Dendritic cell treated with granulocyte-macrophage colony-stimulating factor and Interleukin-4, amounts not matched to agents 40 ng/mL and 50 ng/mL, for 4 days (primary cell): ENCODE measurements at regions of chr3 and their contacts with region 1.

Region 1: DNA sequence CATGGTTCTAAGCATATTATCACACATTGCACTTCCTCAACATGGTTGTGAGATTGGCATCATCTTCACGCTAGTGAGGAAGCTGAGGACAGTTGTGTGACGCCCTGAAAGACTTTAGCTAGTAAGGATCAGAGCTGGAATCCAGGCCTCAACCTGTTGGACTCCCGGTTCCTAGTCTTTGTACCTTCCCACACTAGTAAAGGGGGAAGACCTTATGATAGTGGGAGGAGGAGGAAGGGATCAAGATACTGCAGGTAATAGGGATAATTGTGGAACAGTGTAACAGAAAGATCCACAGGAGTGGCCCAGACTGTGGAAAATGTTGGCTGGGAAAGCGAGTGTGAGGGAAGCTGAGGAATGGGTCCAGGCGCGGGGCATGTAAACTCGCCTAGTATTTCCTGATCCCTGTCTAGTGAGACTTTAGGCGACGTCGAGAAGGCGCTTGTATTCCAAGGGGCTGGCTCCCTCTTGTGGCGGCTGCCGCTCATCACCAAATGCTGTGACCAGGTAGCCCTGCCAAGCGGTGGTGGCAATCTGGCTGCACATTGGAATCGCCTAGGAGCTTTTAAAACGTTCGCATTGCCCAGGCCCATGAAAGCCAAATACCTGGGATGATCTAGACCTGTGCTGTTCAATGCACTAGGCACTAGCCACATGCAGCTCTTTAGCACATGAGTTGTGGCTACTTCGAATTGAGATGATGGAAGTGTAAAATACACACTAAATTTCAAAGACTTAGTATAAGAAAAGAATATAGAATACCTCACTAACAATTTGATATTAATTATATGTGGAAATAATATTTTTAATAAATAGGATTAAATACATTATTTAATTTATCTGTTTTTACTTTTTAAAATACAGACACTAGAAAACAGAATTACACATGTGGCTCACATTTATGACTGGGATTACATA is 38.8 kb upstream of the CLDN18 start:
- H3K4me3 Mint-ChIP-seq: no peak overlapping the region
- H3K27ac Mint-ChIP-seq: no peak overlapping the region
- H3K4me1 Mint-ChIP-seq: peaks cover 5% of the 10 kb centered on the region
- H3K27me3 Mint-ChIP-seq: peaks cover 8% of the 10 kb centered on the region

Region 2: DNA sequence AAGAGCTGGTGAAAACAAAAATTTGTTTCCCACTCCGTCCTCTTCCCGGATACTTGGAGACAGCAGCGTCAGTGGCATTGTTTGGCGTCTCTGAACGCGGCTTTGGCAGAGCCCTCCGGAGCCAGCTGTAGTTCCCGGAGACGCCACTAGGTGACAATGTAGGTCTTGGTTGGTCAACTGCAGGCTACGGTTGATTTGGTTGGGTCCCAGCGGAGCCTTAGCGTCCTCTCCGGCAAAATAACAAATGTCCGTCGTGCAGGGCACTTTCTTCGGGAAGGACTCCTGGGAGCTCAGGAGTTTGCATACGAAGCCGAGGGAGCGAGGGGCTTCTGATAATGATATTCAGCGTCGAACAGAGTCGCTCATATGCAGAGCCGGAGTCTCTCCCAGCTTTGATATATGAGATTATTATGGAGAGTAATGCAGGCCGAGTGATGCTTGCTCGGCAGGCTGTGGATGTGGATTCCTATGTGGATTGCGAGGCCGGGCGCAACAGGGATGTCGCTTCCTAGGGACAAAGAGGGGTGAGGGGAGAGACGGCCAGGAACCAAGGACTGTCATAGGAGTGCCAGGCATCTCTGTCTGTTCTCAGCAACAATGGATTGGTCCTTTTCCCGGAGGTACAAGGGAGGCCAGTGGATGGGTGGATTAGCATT is 938.6 kb before region 1 on chr3:
- intact Hi-C with region 1: loop called (anchors 5 kb)
- H3K4me3 Mint-ChIP-seq: peak overlapping the region; percentile 55
- H3K27ac Mint-ChIP-seq: no peak overlapping the region
- H3K4me1 Mint-ChIP-seq: peaks cover 9% of the 10 kb centered on the region
- H3K27me3 Mint-ChIP-seq: peaks cover 25% of the 10 kb centered on the region

Region 3: DNA sequence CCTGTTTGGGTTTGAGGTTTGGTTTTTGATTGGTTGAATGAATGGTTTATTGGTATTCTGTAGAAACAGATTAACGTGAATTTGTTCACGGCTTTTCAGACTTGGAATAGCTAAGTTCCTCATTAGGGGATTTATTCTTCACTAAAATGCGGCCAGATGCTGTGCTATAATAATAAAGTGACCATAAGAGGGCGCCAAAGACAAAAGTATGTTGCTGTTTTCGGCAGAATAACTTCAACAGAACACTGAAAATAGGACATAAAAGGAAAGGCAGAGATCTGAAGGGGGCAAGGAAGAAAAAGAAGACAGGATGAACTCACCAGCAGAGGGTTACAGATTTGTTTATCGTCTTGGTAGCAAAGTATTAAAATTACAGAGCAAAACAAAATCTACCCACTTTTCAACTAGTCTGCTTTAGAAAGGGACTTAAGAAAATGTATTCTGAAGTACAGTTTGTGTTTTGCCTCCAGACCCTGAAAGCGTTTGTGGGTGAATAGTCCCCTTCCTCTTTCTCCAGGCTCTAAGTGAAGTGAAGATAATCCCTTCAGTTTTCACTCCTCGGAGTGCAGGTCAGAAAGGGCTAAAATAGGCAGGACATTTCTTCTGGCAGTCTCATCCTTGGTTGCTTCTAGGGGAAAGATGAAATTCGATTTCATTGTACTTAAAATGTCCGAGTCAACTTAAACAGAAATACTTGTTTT is 865.7 kb before region 1 on chr3:
- intact Hi-C with region 1: loop called (anchors 5 kb)
- H3K4me3 Mint-ChIP-seq: no peak overlapping the region
- H3K27ac Mint-ChIP-seq: no peak overlapping the region
- H3K4me1 Mint-ChIP-seq: no peaks in the 10 kb centered on the region
- H3K27me3 Mint-ChIP-seq: peaks cover 5% of the 10 kb centered on the region

Region 4: DNA sequence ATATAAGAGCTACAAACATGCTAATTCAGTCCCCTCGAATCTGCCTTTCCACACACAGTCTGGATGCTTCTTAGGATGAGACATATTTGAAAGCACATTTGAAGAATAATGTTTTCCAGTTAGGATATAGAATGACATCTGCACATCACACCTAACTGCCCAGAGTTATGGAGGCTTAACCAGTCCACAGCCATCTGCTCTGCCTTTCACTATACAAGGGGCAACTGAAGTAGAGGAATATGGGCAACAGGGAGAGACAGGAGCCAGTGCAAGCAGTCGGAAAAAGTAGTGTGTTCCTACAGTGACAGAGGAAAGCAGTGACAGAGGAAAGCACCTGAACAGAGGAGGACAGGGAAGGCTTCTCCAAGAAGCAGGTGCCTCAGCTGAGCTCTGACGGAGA is 40.2 kb before region 1 on chr3:
- intact Hi-C with region 1: no loop called
- H3K4me3 Mint-ChIP-seq: no peak overlapping the region
- H3K27ac Mint-ChIP-seq: no peak overlapping the region
- H3K4me1 Mint-ChIP-seq: no peaks in the 10 kb centered on the region
- H3K27me3 Mint-ChIP-seq: peaks cover 3% of the 10 kb centered on the region

Region 5: DNA sequence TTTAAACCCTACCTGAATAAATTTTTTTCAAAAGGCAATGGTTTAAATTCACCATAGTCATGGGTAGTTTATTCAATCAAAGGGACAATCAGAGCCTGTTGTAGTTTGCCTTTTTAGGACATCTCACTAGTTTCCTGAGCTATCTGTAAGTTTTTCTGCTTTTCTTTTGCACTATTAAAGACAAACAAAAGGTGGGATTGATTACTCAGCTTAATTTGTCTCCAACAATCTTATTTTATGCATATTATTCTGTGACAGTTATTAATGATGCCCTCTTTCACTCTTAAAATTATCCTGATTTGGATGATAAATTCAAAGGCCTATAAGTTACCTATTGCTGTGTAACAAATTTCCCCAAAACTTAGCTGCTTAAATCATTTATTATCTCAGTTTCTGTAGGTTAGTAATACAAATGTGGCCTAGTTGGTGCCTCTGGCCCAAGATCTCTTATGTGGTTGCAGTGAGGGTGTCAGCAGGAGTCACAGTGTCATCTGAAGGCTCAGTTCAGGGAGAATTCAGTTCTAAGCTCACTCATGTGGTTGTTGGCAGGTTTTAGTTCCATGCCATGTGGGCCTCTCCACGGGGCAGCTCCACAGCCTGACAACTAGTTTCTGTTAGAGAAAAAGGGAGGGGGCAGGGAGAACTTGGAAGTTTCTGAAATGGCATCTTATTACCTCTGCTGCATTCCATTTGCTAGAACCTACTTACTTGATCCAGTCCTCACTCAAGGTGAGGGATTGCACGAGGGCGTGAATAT is 231.9 kb after region 1 on chr3:
- intact Hi-C with region 1: no loop called
- H3K4me3 Mint-ChIP-seq: no peak overlapping the region
- H3K27ac Mint-ChIP-seq: no peak overlapping the region
- H3K4me1 Mint-ChIP-seq: peaks cover 34% of the 10 kb centered on the region
- H3K27me3 Mint-ChIP-seq: no peaks in the 10 kb centered on the region